Activated T-helper 2 cell treated with anti-CD3 and anti-CD28 coated beads, Interferon-gamma antibody, Interleukin-2, Interleukin-4, amounts not matched to agents 10 μg/mL and 5 μg/mL and 100 μg/mL, durations not matched to agents 14 hours and 24 hours and 36 hours (primary cell): ENCODE measurements at regions of chr7 and their contacts with region 1.

Region 1: GRCh38 chr7:13990984-13991790 is 1.7 kb upstream of the ETV1 start:
- DNase-seq: peak; percentile 44
- H3K4me3 Mint-ChIP-seq: no peak overlapping the region
- H3K27ac Mint-ChIP-seq: no peak overlapping the region
- H3K4me1 Mint-ChIP-seq: no peaks in the 10 kb centered on the region
- H3K27me3 Mint-ChIP-seq: no peaks in the 10 kb centered on the region

Region 2: GRCh38 chr7:13420726-13421125 is 570.5 kb before region 1 on chr7:
- intact Hi-C with region 1: no loop called
- DNase-seq: no peak
- H3K4me3 Mint-ChIP-seq: no peak overlapping the region
- H3K27ac Mint-ChIP-seq: no peak overlapping the region
- H3K4me1 Mint-ChIP-seq: no peaks in the 10 kb centered on the region
- H3K27me3 Mint-ChIP-seq: no peaks in the 10 kb centered on the region

Region 3: DNA sequence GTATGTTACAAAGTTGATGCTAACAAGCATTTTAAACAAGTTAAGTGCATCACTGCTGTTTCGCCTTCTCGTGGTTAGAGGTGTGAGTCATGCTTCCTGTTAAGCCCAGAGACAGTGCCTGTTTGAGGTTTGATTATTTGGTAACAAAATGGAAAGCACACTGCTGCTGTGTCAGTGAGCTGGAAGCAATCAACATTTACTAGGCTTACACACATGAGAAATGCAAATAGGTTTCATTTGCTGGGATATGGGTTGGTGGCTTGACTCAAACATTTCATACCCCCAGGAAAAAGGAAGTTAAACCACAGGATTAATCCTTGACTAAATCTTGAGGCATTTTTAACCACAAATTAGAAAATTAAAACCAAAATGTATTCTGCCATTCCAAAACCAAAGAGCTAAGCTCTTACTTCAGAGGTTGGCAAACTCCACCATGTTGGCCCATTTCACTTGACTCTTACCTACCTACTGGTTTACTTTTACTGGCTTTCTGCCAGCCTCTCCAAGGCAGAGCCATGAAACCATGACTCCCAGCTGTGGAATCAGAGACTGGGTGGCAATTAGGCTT is 140.9 kb before region 1 on chr7:
- intact Hi-C with region 1: loop called (anchors 5 kb)
- DNase-seq: peak; percentile 41
- H3K4me3 Mint-ChIP-seq: no peak overlapping the region
- H3K27ac Mint-ChIP-seq: no peak overlapping the region
- H3K4me1 Mint-ChIP-seq: peaks cover 18% of the 10 kb centered on the region
- H3K27me3 Mint-ChIP-seq: peaks cover 1% of the 10 kb centered on the region

Region 4: GRCh38 chr7:13908667-13909397 is 82.4 kb before region 1 on chr7:
- intact Hi-C with region 1: loop called (anchors 2 kb)
- DNase-seq: no peak
- H3K4me3 Mint-ChIP-seq: peak overlapping the region; percentile 33
- H3K27ac Mint-ChIP-seq: no peak overlapping the region
- H3K4me1 Mint-ChIP-seq: peaks cover 25% of the 10 kb centered on the region
- H3K27me3 Mint-ChIP-seq: peaks cover 1% of the 10 kb centered on the region